Activated T-helper 1 cell treated with anti-CD3 and anti-CD28 coated beads, Interleukin-12 subunit alpha, Interleukin-12 subunit beta, Interleukin-2, Interleukin-4 antibody, amounts not matched to agents 30 ng/mL and 10 ng/mL and 1 ng/mL, durations not matched to agents 14 hours and 24 hours and 36 hours (primary cell): ENCODE measurements at regions of chr20 and their contacts with region 1.

Region 1: GRCh38 chr20:49846206-49846807 is 33.7 kb downstream of the SLC9A8 start:
- DNase-seq: peak; percentile 42
- H3K4me3 Mint-ChIP-seq: no peak overlapping the region
- H3K27ac Mint-ChIP-seq: no peak overlapping the region
- H3K4me1 Mint-ChIP-seq: peaks cover 19% of the 10 kb centered on the region
- H3K27me3 Mint-ChIP-seq: no peaks in the 10 kb centered on the region

Region 2: GRCh38 chr20:49330544-49331239 is 515.6 kb before region 1 on chr20:
- intact Hi-C with region 1: loop called (anchors 5 kb)
- DNase-seq: no peak
- H3K4me3 Mint-ChIP-seq: no peak overlapping the region
- H3K27ac Mint-ChIP-seq: no peak overlapping the region
- H3K4me1 Mint-ChIP-seq: no peaks in the 10 kb centered on the region
- H3K27me3 Mint-ChIP-seq: peaks cover 30% of the 10 kb centered on the region

Region 3: DNA sequence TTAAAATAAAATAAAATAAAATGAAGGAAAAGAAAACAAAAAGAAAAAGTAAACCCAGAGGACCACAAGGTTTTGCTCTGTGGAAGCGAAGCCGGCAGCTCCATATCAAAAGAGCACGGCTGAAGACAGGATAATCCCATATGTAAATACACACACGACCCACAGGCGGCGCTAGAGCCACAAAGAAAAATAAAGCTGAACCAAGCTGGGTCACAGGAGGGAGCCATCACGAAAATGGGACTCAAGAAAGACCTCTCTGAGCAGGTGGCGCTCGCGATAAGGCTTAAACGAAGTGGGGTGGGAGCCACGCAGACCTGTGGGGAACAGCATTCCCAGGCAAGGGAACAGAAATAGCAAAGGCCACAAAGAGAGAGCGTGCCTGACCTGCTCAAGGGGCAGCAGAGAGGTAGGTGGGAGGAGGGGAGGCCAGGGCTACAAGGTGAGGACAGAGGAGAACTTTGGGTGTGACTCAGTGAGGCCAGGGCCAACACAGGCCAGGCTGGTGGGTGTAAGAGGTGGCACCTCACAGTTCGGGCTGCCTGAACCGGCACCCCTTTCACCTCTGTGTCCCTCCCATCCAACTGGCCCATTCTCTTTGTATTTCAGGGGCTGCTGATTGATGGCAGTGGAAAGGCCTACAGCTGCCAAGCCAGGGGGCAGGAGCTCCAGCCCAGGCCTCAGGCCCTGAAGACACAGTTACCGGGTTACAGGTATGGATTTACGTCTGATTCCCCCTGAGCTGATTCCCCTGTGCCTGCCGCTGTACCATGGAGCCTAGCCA is 304.4 kb before region 1 on chr20:
- intact Hi-C with region 1: loop called (anchors 1 kb)
- DNase-seq: peak; percentile 60
- H3K4me3 Mint-ChIP-seq: peak overlapping the region; percentile 19
- H3K27ac Mint-ChIP-seq: peak overlapping the region; percentile 97
- H3K4me1 Mint-ChIP-seq: peaks cover 26% of the 10 kb centered on the region
- H3K27me3 Mint-ChIP-seq: peaks cover 5% of the 10 kb centered on the region

Region 4: DNA sequence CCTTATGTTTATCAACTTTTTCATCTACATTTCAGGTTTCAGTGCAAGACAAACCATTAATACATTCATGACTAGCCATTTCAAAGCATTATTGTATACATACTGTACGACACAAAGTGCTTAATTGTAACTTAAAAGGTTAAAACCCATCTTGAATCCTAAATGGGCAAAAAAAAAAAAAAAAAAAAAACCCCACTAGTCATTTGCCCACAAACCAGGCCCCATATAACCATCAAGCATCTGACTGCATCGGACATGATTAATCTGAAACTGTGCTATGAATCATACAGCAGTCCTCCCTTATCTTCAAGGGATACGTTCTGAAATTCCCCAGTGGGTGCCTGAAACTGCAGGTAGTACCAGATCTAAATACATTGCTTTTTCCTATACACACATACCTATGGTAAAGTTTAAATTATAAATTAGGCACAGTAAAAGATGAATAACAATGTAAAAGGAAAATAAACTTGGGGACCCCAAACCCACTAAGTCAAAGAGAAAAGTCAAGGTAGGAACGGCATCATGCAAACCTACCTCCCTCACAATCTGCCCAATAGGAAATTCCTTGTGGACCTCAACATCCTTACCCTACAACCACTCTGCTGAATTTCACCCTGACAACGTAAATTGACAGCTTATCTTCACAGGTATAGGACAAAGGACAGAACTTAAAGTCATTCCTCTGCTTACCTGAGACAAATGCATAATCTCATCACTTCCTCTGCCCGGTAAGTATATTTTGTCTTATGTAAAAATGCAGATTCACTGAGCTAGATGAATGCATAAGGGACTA is 146.9 kb before region 1 on chr20:
- intact Hi-C with region 1: no loop called
- DNase-seq: no peak
- H3K4me3 Mint-ChIP-seq: no peak overlapping the region
- H3K27ac Mint-ChIP-seq: no peak overlapping the region
- H3K4me1 Mint-ChIP-seq: peaks cover 62% of the 10 kb centered on the region
- H3K27me3 Mint-ChIP-seq: no peaks in the 10 kb centered on the region

Region 5: DNA sequence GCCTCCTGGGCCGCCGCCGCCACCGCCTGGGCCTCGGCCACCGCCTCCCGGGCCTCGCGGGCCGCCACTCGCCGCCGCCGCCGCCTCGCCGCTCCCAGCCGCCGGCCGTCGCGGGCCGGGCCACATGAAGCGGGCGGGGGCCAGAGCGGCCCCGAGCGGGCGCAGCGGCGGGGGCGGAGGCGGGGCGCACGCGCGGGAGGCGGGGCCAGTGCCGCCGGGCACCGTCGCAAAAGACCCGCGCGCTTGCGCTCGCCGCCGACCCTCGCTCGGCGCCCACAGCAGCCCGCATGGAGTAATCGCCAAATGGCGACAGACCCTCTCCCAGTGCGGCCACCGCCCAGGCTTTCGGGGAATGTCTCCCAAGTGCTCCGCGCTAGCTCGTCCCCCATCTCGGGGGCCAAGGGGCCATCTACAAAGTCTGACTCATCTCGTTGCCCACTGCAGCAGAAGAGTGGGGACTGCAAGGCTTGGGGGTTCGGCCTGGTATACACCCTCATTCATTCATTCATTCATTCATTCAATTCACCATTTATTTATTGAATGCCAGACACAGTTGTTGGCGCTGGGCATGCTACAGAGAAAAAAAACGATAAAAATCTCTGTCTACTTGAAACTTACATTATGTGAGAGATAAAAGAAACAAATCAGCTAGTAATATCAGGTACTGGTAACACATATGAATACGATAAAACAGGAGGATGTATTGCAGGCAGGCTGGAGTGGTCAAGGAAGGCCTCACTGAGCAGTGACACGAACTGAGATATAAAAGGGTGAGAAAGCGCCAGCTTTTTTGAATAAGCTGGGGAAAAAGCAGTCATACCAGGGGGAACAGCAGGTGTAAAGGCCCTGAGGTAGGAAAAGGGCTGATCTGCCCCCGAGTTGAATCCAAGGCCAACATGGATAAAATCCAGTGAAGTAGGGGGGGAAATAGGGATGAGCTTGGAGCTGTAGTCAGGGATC is 132.3 kb before region 1 on chr20 and contains the start of gene B4GALT5:
- intact Hi-C with region 1: loop called (anchors 5 kb)
- DNase-seq: peak; percentile 60
- H3K4me3 Mint-ChIP-seq: peak within 1 kb of the TSS; percentile 92
- H3K27ac Mint-ChIP-seq: peak within 1 kb of the TSS; percentile 94
- H3K4me1 Mint-ChIP-seq: peaks cover 49% of the 10 kb centered on the region
- H3K27me3 Mint-ChIP-seq: peaks cover 5% of the 10 kb centered on the region
- total RNA-seq, gene B4GALT5: 38.9 and 39.3 TPM in 2 replicates